ENCODE measurements at regions of chr3 and their contacts with region 1.

Region 1: DNA sequence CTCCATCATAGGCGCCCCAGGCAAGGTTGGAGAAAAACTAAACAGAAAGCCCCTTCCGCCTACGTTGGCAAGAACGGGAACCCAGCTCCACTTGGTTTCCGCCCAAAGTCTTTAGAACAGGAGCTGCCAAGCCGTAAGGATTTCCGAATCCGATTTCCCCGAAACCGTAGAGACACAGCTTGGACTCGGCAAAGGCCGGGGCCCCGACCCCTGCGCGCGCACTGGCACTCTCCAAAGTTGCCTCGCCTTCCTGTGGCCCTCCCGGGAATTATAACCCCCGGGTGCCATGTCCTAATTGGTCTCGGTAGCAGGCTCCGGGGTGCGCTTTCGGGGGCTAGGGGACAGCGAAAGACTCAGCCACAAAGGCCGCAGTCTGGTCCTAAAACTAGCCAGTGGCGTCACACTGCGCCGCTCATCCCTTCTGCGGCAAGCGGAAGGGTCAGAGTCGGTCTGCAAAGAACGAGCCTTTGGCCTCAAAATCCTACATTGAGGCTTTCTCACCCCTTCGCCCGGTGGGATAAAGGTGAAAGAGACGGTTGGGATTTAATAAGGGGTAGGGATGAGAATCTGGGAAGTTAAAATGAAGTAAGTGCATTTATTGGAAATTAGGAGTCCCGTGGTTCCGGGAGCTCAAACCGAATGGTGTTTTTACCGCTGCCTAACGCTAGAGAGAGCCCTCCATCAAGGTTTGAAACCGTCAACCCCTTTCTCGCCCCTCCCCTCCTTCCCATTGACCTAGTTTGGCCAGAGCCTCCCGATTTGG is 6.8 kb downstream of the BCL6 start:
- DNase-seq: peak; percentile 82
- H3K4me3 Mint-ChIP-seq: peak overlapping the region; percentile 90
- H3K27ac Mint-ChIP-seq: peak overlapping the region; percentile 99
- H3K4me1 Mint-ChIP-seq: peaks cover 44% of the 10 kb centered on the region
- H3K27me3 Mint-ChIP-seq: no peaks in the 10 kb centered on the region

Region 2: DNA sequence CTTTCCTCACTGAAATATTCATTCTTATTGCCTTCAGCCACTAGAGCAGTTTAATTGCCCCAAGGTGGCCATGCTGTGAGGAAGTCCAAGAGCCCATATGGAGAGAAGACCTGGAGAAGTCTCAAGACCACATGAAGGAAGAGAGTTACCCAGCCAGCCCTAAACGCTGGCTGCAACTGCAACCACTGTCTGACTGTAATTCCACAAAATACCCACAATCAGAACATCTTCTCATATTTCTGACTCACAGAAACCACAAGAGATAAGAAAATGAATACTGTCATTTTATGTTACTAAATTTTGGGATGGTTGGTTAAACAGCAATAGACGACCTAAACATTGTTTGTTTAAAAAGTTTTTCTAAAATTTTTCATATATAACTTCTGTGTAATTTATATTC is 53.6 kb before region 1 on chr3:
- CTCF ChIA-PET with region 1: no interaction called
- POLR2A ChIA-PET with region 1: no interaction called
- intact Hi-C with region 1: no loop called
- DNase-seq: peak; percentile 18
- H3K4me3 Mint-ChIP-seq: no peak overlapping the region
- H3K27ac Mint-ChIP-seq: no peak overlapping the region
- H3K4me1 Mint-ChIP-seq: peaks cover 3% of the 10 kb centered on the region
- H3K27me3 Mint-ChIP-seq: peaks cover 39% of the 10 kb centered on the region

Region 3: GRCh38 chr3:187919048-187919447 is 180.5 kb after region 1 on chr3:
- CTCF ChIA-PET with region 1: interaction called, 16 read pairs
- POLR2A ChIA-PET with region 1: interaction called, 15 read pairs
- intact Hi-C with region 1: no loop called
- DNase-seq: peak; percentile 75
- H3K4me3 Mint-ChIP-seq: peak overlapping the region; percentile 51
- H3K27ac Mint-ChIP-seq: peak overlapping the region; percentile 94
- H3K4me1 Mint-ChIP-seq: peaks cover 75% of the 10 kb centered on the region
- H3K27me3 Mint-ChIP-seq: peaks cover 3% of the 10 kb centered on the region

Region 4: GRCh38 chr3:188164248-188164687 is 425.8 kb after region 1 on chr3:
- CTCF ChIA-PET with region 1: interaction called, 24 read pairs
- POLR2A ChIA-PET with region 1: no interaction called
- intact Hi-C with region 1: loop called (anchors 2 kb)
- DNase-seq: peak; percentile 59
- H3K4me3 Mint-ChIP-seq: no peak overlapping the region
- H3K27ac Mint-ChIP-seq: peak overlapping the region; percentile 76
- H3K4me1 Mint-ChIP-seq: peaks cover 62% of the 10 kb centered on the region
- H3K27me3 Mint-ChIP-seq: no peaks in the 10 kb centered on the region

Region 5: DNA sequence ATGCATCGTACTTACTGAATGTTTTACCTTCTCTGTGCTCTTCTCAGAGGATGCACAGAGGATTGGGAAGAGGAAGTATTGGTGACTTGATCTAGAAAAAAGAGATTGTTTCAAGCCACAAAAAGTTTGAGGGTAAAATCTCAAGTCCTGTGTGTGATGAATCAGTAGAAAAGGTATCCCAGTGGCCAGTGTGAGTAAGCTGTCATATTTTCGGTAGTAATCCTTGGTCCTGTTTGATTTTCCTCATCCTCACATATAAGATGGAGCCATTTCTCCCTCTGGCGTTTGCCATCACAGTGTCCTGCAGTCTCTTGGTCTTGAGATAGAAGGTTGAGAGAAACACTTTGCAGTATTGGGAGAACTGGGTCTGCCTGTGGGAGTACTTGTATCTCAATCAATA is 582.2 kb after region 1 on chr3:
- CTCF ChIA-PET with region 1: interaction called, 9 read pairs
- POLR2A ChIA-PET with region 1: interaction called, 3 read pairs
- intact Hi-C with region 1: loop called (anchors 1 kb)
- DNase-seq: no peak
- H3K4me3 Mint-ChIP-seq: no peak overlapping the region
- H3K27ac Mint-ChIP-seq: no peak overlapping the region
- H3K4me1 Mint-ChIP-seq: peaks cover 58% of the 10 kb centered on the region
- H3K27me3 Mint-ChIP-seq: peaks cover 2% of the 10 kb centered on the region

Region 6: GRCh38 chr3:188664795-188665194 is 926.3 kb after region 1 on chr3:
- CTCF ChIA-PET with region 1: interaction called, 6 read pairs
- POLR2A ChIA-PET with region 1: no interaction called
- intact Hi-C with region 1: loop called (anchors 2 kb)
- DNase-seq: peak; percentile 22
- H3K4me3 Mint-ChIP-seq: no peak overlapping the region
- H3K27ac Mint-ChIP-seq: no peak overlapping the region
- H3K4me1 Mint-ChIP-seq: peaks cover 16% of the 10 kb centered on the region
- H3K27me3 Mint-ChIP-seq: no peaks in the 10 kb centered on the region

Region 7: DNA sequence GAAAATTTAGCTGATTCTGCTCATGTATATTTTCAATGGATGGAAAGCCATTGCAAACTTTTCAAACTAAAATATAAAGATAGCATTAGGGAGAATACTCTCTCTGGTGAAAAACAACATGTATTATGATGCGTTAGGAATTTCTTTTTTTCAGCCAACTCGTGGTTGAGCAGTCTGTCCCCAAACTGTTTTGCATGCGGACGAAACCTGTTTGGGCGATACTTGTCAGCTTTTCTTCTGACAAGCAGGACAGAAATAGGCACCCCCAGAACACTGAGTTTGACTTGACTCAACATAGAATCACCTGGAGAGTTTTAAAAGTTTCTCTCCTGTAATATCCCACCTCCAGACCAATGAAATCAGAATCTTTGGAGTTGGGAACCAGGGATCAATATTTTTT is 1015.8 kb after region 1 on chr3:
- CTCF ChIA-PET with region 1: interaction called, 47 read pairs
- POLR2A ChIA-PET with region 1: no interaction called
- intact Hi-C with region 1: loop called (anchors 1 kb)
- DNase-seq: no peak
- H3K4me3 Mint-ChIP-seq: no peak overlapping the region
- H3K27ac Mint-ChIP-seq: no peak overlapping the region
- H3K4me1 Mint-ChIP-seq: peaks cover 24% of the 10 kb centered on the region
- H3K27me3 Mint-ChIP-seq: no peaks in the 10 kb centered on the region

Region 8: GRCh38 chr3:189041482-189042090 is 1303.1 kb after region 1 on chr3:
- CTCF ChIA-PET with region 1: interaction called, 113 read pairs
- POLR2A ChIA-PET with region 1: interaction called, 7 read pairs
- intact Hi-C with region 1: loop called (anchors 2 kb)
- DNase-seq: peak; percentile 86
- H3K4me3 Mint-ChIP-seq: no peak overlapping the region
- H3K27ac Mint-ChIP-seq: peak overlapping the region; percentile 23
- H3K4me1 Mint-ChIP-seq: peaks cover 37% of the 10 kb centered on the region
- H3K27me3 Mint-ChIP-seq: no peaks in the 10 kb centered on the region